ENCODE measurements at regions of chr17 and their contacts with region 1.

Region 1: DNA sequence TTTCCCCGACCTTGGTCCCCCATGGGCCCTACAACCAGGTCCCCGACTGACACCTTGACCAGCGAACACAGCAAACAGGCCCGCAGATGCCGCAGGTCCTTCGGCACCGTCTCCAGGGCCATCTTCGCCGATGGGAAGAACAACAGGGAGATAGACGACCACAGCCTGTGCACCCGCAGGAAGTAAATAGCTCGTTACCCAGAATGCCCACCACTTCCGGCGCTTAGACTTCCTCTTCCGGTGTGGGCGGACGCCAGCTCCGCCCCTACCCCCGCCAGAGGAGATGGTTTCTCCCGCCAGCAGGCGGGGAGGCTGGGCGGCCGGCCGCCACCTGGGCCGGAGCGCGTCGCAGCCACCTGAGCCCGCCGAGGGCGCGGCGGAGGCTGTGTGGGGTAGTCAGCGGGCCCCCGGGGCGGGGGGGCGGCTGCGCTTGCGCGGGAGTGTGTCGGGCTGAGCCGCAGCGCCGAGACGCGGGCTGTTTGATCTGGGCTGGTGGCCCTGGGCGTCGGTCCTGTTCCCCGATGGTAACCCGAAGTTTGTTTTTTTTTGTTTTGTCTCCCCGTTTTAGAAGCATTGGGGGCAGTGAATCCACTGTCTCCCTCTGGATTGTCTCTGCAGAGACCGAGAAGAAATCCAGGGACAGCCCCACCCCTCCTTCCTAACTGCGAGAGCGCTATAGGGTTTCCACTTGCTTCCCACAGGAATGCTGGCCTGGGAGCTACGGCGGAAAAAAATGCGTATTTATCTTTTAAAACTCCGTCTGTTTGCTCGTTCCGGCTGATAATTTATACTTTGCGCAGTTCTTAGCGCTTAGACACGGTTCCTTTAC is at the start of gene SUPT4H1:
- DNase-seq: peak; percentile 94
- CTCF ChIP-seq: no peak

Region 2: DNA sequence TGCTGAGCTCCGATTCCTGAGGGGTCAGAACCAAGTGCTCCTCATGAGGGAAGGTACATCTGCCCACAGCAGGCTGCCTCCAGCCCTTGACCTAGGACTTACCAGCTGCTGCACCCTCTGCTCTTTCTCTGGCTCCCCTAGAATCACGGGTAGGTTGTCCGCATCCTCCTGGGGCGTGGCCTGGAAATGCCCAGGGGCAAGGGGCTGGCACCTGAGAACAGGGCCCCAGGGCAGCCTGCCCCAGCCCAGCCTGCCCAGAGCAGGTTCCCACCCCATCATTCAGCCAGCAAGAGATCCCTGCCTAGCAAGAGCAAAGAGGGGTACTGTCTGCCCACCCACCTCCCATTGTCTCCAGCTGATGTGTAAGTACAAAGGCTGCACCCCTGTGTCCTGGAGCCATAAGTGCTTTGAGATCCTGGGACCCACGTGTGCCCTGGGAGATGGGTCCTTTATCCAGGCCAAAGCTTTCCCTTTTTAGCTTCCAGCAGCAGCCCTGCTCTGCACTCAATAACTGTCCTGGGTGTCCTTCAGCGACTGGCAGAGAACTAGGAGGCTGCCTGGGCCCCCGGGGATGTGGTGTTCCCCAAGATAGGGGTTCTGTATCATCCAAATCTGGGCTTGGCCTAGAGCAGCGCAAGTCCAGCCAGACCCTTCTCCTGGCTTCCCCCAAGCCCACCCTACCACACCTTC is 28.7 kb before region 1 on chr17:
- CTCF ChIA-PET with region 1: interaction called, 31 read pairs
- POLR2A ChIA-PET with region 1: interaction called, 13 read pairs
- DNase-seq: no peak
- CTCF ChIP-seq: no peak

Region 3: GRCh38 chr17:58329035-58329809 is 23.0 kb before region 1 on chr17:
- CTCF ChIA-PET with region 1: interaction called, 8 read pairs
- POLR2A ChIA-PET with region 1: interaction called, 36 read pairs
- DNase-seq: peak; percentile 76
- CTCF ChIP-seq: peak; percentile 65

Region 4: GRCh38 chr17:58337600-58338453 is 14.4 kb before region 1 on chr17:
- CTCF ChIA-PET with region 1: interaction called, 41 read pairs
- POLR2A ChIA-PET with region 1: interaction called, 24 read pairs
- DNase-seq: peak; percentile 82
- CTCF ChIP-seq: no peak

Region 5: DNA sequence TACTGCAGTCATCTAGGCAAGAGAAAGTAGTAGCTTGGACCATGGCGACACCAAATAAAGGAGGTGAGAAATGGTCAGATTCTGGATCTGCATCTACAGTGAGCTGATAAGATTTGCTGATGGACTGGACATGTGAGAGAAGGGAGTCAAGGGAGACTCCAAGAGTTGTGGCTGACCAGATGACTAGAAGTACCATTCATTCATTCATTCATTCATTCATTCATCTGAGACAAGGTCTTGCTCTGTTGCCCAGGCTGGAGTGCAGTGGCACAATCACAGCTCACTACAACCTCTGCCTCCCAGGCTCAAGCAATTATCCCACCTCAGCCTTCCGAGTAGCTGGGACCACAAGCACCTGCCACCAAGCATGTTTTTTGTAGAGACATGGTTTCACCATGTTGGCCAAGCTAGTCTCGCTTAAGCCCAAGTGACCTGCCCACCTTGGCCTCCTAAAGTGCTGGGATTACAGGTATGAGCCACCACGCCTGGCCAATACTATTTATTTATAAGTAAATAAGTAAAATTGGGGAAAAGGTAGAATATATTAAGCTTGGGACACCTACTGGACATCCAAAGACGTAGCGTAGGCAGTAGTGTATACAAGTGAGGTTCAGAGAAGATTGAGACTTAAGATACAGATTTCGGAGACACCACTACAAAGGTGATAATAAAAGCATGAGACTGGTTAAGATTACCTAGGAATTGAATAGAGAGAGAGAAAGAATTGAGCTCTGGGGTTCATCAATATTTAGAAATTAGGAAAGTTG is 80.8 kb after region 1 on chr17:
- CTCF ChIA-PET with region 1: no interaction called
- POLR2A ChIA-PET with region 1: no interaction called
- DNase-seq: no peak
- CTCF ChIP-seq: no peak

Measured in GM10248 (cell line).